Caco-2 (cell line): ENCODE measurements at regions of chr18 and their contacts with region 1.

Region 1: DNA sequence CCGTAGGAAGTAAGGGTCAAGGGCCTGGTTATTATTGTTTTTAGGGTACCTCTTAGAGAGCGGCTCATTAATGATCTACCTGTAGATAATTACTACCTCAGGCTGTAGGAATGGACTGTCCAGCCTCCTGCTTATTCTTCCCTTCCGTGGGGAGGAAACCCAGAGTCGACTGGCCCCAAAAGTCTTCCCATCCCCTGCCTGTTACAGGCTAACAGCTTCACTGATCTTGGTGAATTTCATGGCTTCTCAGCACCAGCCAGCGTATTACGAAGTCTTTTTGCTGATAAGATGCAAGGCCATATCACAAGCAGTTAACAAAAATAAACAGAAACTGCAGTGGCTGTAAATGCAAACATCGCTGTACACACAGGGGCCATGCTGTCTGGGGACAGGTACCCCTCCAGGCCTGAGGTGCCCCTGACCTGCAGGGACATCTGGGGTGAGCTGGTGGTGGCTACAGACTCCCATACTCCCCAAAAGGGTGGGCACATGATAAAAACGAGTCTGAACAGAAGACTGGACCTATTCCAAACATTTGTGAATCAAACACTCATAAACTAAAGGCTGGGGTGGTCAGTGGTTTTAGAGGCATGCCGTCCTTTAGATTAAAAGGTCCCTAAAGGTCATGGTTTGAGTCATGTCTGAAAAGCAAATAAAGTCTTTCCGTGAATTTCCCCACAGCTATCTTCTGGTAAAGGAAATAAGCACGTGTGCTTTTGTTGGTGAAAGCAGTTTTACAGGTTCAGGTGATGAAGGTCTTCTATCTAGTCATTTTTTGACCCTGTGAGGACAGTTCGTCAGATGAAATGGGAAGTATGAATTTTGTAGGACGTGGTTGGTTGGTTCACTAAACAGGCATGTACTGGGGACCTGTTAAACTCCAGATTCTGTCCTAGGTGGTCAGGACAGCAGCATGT is 36.7 kb downstream of the TTC39C start:
- DNase-seq: peak; percentile 52 to 53
- H3K4me3 ChIP-seq: no peak overlapping the region
- H3K4me3 Mint-ChIP-seq: peak overlapping the region; percentile 65
- H3K27ac Mint-ChIP-seq: peak overlapping the region; percentile 80
- H3K4me1 ChIP-seq: peaks cover 8% of the 10 kb centered on the region; the same call in 1 of the 2 replicates
- H3K4me1 Mint-ChIP-seq: peaks cover 13% of the 10 kb centered on the region
- H3K27me3 ChIP-seq: no peaks in the 10 kb centered on the region
- H3K27me3 Mint-ChIP-seq: no peaks in the 10 kb centered on the region
- CTCF ChIP-seq: no peak

Region 2: GRCh38 chr18:23684515-23685197 is 366.6 kb before region 1 on chr18:
- CTCF ChIA-PET with region 1: no interaction called
- POLR2A ChIA-PET with region 1: no interaction called
- intact Hi-C with region 1: no loop called
- DNase-seq: peak; percentile 42 to 46
- H3K4me3 ChIP-seq: no peak overlapping the region
- H3K4me3 Mint-ChIP-seq: no peak overlapping the region
- H3K27ac Mint-ChIP-seq: peak overlapping the region; percentile 27
- H3K4me1 ChIP-seq: peaks cover 6% of the 10 kb centered on the region; the same call in 1 of the 2 replicates
- H3K4me1 Mint-ChIP-seq: no peaks in the 10 kb centered on the region
- H3K27me3 ChIP-seq: no peaks in the 10 kb centered on the region
- H3K27me3 Mint-ChIP-seq: no peaks in the 10 kb centered on the region
- CTCF ChIP-seq: no peak

Region 3: GRCh38 chr18:24014062-24014985 is 37.0 kb before region 1 on chr18 and contains the start of gene TTC39C:
- CTCF ChIA-PET with region 1: no interaction called
- POLR2A ChIA-PET with region 1: no interaction called
- intact Hi-C with region 1: loop called (anchors 5 kb)
- DNase-seq: peak; percentile 38 to 47
- H3K4me3 ChIP-seq: peak within 1 kb of the TSS; percentile 72
- H3K4me3 Mint-ChIP-seq: peak within 1 kb of the TSS; percentile 81
- H3K27ac Mint-ChIP-seq: peak within 1 kb of the TSS; percentile 59
- H3K4me1 ChIP-seq: no peaks in the 10 kb centered on the region
- H3K4me1 Mint-ChIP-seq: no peaks in the 10 kb centered on the region
- H3K27me3 ChIP-seq: no peaks in the 10 kb centered on the region
- H3K27me3 Mint-ChIP-seq: no peaks in the 10 kb centered on the region
- CTCF ChIP-seq: no peak
- total RNA-seq, gene TTC39C: 9.1 and 9.3 TPM in 2 replicates

Region 4: GRCh38 chr18:24063121-24063731 is 11.9 kb after region 1 on chr18:
- CTCF ChIA-PET with region 1: no interaction called
- POLR2A ChIA-PET with region 1: no interaction called
- intact Hi-C with region 1: loop called (anchors 1 kb)
- DNase-seq: no peak
- H3K4me3 ChIP-seq: no peak overlapping the region
- H3K4me3 Mint-ChIP-seq: no peak overlapping the region
- H3K27ac Mint-ChIP-seq: no peak overlapping the region
- H3K4me1 ChIP-seq: no peaks in the 10 kb centered on the region; the same call in 1 of the 2 replicates
- H3K4me1 Mint-ChIP-seq: peaks cover 16% of the 10 kb centered on the region
- H3K27me3 ChIP-seq: no peaks in the 10 kb centered on the region
- H3K27me3 Mint-ChIP-seq: no peaks in the 10 kb centered on the region
- CTCF ChIP-seq: no peak